PC-9 (cell line): ENCODE measurements at regions of chr2 and their contacts with region 1.

Region 1: DNA sequence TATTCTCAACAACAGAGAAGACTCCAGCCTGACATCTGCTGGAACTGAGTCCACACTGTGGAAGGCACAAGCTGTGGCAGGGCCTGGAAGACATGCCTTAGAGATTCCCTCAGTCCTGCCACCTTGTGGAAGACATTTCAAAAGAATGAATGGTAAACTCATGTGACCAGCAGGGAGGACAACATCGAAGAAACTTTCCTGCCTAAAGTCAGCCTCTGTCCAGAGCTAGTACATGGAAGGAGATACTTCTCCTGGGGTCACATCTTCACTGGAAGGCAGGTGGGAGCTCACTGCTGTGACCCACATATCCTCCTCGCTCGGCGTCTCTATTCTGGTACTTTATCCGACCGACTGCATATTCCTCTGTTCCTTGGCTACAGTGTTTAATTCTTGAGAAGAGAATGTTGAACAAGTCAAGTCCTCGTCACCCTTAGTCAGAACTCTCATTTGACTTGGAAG is 59.5 kb downstream of the PUM2 start:
- DNase-seq: peak; percentile 57 to 77
- H3K4me3 ChIP-seq: no peak overlapping the region
- H3K27ac ChIP-seq: peak overlapping the region; percentile 32
- H3K4me1 ChIP-seq: peaks cover 29% of the 10 kb centered on the region
- H3K27me3 ChIP-seq: no peaks in the 10 kb centered on the region
- CTCF ChIP-seq: peak; percentile 83

Region 2: DNA sequence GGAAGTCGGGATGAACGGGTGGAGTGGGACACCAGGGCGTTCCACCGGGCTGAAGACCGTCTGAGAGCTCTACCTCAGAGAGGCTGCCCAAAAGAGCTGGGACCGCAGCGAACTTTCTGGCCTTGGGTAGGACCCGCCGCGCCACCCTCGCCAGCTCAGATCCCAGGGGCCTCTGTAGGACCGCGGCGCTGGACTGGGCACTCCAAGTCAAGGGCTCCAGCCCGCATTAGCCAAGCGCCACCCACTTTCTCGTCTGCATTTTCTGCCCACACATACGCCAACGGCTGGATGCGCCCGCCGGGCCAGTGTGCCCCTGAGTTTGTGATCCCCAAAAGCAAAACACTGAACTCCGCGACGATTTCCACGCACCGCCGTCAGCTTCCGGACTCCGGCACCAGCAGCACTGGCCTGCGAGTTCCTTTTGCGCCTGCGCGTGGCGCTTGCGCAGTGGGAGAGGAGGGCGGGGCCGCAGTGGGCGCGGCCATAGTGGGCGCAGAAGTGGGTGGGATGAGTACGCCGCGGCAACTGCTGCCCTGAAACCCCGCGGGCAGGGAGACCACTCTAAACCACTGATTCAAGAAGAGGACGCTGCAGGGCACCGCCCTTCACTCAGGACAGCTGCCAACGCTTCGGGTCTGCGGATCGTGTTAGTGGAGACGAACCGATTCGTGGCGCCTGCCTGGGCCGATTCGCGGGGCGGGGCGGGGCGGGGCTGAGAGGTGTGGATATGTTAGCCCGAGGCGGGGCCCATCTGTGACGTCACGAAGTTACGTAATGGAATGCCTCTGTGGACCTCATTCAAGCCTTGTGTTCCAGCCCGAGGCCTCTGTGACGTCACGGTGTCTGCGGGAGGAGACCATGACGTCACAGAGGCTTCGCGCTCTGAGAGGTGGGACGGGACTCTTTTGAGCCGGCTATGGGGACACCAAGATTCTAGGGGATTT is 943.2 kb before region 1 on chr2:
- CTCF ChIA-PET with region 1: interaction called, 14 read pairs
- POLR2A ChIA-PET with region 1: no interaction called
- intact Hi-C with region 1: no loop called
- DNase-seq: peak; percentile 86 to 97
- H3K4me3 ChIP-seq: peak overlapping the region; percentile 70
- H3K27ac ChIP-seq: peak overlapping the region; percentile 78
- H3K4me1 ChIP-seq: peaks cover 12% of the 10 kb centered on the region
- H3K27me3 ChIP-seq: no peaks in the 10 kb centered on the region
- CTCF ChIP-seq: no peak

Region 3: DNA sequence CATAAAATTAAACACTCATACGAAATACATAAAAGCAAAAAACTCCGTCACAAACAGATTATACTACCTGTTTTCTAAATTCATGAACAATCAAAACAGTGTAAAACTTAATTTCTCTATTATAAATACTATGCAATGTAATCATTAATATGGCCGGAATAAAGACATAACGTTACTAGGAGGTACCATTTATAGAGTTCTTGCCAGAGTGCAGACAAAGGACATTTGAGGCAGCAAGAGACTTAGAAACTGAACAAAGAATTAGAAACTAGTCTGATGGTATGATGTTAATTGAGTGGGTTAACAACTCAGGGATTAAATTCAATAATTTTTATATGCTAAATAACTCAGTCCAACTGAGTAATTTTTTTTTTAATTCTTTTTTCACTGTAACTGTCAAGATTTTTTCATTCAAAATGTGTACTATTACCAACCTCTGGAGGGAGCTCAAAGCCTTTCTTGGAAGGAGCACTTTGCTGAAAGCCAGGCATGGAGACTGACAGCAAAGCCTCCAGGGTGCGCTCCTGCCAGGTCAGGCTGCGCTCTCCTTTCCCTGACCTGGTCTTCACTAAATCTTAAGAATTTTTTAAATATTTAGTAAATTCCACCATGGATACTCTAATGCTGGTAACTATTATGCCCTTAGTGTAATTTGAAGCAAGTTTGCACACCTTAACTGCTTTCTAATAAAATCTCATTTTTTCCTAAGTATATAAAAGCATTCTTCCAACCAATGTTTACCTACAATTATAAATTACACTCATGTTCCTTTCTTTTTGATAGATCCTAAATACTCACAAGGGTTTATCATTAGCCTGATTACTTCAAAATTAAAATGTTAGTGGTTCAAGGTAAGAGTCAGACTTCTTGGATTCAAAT is 335.4 kb before region 1 on chr2:
- CTCF ChIA-PET with region 1: interaction called, 3 read pairs
- POLR2A ChIA-PET with region 1: no interaction called
- intact Hi-C with region 1: loop called (anchors 1 kb)
- DNase-seq: peak; percentile 57 to 69
- H3K4me3 ChIP-seq: no peak overlapping the region
- H3K27ac ChIP-seq: no peak overlapping the region
- H3K4me1 ChIP-seq: no peaks in the 10 kb centered on the region
- H3K27me3 ChIP-seq: no peaks in the 10 kb centered on the region
- CTCF ChIP-seq: peak; percentile 91

Region 4: DNA sequence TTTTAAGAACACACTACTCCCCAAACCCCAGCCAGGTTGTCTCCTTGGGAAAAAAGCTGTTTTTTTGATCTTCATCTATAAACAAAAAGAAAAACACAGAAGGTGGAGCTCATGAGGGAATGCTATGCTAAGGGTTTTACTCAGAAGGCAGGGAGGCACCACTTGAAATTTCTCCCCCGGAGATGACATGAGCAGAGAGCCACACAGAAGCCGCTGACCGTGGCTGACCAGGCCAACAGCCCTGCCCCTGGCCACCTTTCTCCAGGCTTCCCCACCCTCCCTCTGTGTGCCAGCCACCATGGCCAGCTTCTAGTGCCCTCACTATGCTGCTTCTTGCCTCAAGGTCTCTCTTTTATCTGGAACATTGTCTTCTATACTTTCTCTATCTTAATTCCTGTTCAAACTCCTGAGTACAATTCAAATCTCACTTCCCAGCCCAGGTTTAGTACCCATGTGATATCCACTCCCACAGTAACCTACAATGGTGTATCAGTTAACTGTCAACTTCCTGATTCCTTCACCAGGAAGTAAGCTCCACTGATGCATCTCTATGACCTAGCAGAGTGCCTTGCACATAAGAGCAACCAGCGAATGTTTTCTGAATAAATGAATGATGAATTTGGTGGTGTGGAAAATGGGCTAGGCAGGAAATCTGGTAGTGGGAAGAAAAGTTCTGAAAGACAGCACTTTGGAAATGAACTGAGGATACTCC is 255.0 kb before region 1 on chr2:
- CTCF ChIA-PET with region 1: no interaction called
- POLR2A ChIA-PET with region 1: no interaction called
- intact Hi-C with region 1: loop called (anchors 10 kb)
- DNase-seq: no peak
- H3K4me3 ChIP-seq: no peak overlapping the region
- H3K27ac ChIP-seq: no peak overlapping the region
- H3K4me1 ChIP-seq: peaks cover 11% of the 10 kb centered on the region
- H3K27me3 ChIP-seq: no peaks in the 10 kb centered on the region
- CTCF ChIP-seq: no peak

Region 5: GRCh38 chr2:20106746-20107145 is 184.4 kb before region 1 on chr2:
- CTCF ChIA-PET with region 1: interaction called, 6 read pairs
- POLR2A ChIA-PET with region 1: no interaction called
- intact Hi-C with region 1: loop called (anchors 1 kb)
- DNase-seq: peak; percentile 70 to 83
- H3K4me3 ChIP-seq: peak overlapping the region; percentile 68
- H3K27ac ChIP-seq: peak overlapping the region; percentile 32; the same call in 1 of the 2 replicates
- H3K4me1 ChIP-seq: peaks cover 45% of the 10 kb centered on the region
- H3K27me3 ChIP-seq: no peaks in the 10 kb centered on the region
- CTCF ChIP-seq: peak; percentile 92

Region 6: GRCh38 chr2:20135631-20136050 is 155.5 kb before region 1 on chr2:
- CTCF ChIA-PET with region 1: interaction called, 10 read pairs
- POLR2A ChIA-PET with region 1: no interaction called
- intact Hi-C with region 1: no loop called
- DNase-seq: no peak
- H3K4me3 ChIP-seq: no peak overlapping the region
- H3K27ac ChIP-seq: no peak overlapping the region
- H3K4me1 ChIP-seq: peaks cover 20% of the 10 kb centered on the region
- H3K27me3 ChIP-seq: no peaks in the 10 kb centered on the region
- CTCF ChIP-seq: peak; percentile 66

Region 7: DNA sequence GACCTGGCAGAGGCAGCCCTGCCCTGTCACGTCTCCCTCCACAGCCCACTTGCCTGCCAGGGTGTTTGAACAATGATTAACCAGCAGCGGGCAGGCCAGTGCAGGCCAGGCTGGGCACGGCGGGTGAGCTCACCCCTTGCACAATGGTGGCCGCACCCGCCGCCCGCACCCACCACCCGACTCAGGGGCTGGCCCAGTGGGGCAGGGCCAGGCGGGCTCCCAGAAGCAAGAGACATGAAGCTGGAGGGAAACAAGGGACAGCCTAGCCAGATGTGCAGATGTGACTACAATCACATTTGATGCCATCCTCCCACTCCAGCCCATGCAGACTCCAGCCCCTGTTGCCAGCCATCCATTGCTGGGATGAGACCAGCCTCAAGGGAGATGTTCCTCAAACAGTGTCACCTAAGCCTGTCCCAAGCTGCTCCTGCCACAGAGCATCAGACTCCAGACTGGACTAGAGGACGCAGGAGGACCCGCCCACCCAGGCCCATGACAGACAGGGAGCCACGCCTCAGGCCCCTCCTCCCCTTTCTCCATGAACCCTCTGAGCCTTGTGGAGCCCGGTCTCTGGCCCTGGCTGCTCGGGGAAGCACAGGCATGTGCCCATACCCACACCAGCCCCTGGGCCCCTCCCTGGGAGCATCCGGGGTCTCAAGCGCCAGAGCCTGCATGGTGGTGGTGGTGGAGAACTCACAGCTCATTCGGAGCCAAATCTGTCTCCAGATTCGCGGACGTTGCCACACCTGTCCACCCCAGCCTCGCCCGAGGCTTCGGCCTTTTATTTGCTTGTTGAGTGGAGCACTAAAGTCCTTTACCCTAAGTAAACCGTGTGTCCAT is 111.2 kb before region 1 on chr2:
- CTCF ChIA-PET with region 1: no interaction called
- POLR2A ChIA-PET with region 1: no interaction called
- intact Hi-C with region 1: loop called (anchors 1 kb)
- DNase-seq: peak in 1 of 2 experiments; percentile 80
- H3K4me3 ChIP-seq: no peak overlapping the region
- H3K27ac ChIP-seq: no peak overlapping the region
- H3K4me1 ChIP-seq: peaks cover 28% of the 10 kb centered on the region
- H3K27me3 ChIP-seq: no peaks in the 10 kb centered on the region
- CTCF ChIP-seq: no peak

Region 8: GRCh38 chr2:21993002-21993401 is 1701.9 kb after region 1 on chr2:
- CTCF ChIA-PET with region 1: no interaction called
- POLR2A ChIA-PET with region 1: no interaction called
- intact Hi-C with region 1: no loop called
- DNase-seq: no peak
- H3K4me3 ChIP-seq: no peak overlapping the region
- H3K27ac ChIP-seq: no peak overlapping the region
- H3K4me1 ChIP-seq: no peaks in the 10 kb centered on the region
- H3K27me3 ChIP-seq: no peaks in the 10 kb centered on the region
- CTCF ChIP-seq: no peak